ENCODE measurements at regions of chr19 and their contacts with region 1.

Region 1: DNA sequence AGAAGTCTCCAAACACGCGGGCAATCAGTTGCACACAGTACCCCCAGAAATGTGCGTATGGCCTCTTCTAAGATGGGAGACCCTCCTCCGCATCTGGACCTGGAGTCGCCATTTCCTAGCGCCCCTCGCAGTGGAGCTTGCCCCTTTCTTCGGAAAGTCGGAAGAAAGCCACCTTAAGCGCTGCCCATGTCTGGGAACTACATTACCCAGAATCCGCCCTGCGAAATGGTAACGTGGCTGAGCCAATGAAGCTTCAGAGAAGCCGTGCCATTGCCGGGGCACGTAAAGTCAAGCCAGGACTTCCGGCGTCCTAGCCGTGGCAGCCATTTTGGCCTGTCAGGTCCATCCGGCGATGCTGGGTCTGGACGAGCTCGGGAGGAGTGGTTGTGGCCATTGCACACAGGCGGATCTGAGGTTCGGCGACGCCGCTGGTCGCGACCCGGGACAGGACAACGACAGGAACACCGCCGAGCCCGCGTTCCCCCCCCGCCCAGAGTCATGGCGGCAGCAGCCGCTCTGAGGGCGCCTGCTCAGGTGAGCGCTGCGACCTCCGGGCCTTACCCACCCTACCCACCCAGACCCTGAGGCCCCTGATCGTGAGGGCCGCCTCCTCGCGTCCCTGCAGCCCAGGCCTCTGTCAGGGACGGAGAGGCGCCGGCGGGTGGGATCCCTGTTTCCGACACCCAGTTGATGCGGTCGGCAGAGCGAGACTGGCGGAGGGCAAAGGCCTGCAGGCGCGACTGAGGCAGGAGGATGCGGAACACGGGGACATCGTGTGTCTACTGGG is at the start of gene ZNF586:
- DNase-seq: peak; percentile 90
- H3K4me3 ChIP-seq: peak within 1 kb of the TSS; percentile 50 to 99 (median 85)
- H3K27ac ChIP-seq: peak within 1 kb of the TSS; percentile 85 to 95 (median 88)
- H3K4me1 ChIP-seq: peaks cover 0 to 19% (median 8%) of the 10 kb centered on the region in 4 donors
- H3K27me3 ChIP-seq: no peaks in the 10 kb centered on the region
- CTCF ChIP-seq: no peak
- EP300 ChIP-seq: no peak
- POLR2A ChIP-seq: peak; percentile 58
- total RNA-seq, gene ZNF586: 20.8 to 79.2 (median 27.3) TPM

Region 2: GRCh38 chr19:57719901-57720519 is 49.5 kb before region 1 on chr19:
- in situ Hi-C with region 1: no loop called
- intact Hi-C with region 1: no loop called
- DNase-seq: no peak
- H3K4me3 ChIP-seq: no peak overlapping the region
- H3K27ac ChIP-seq: no peak overlapping the region
- H3K4me1 ChIP-seq: no peaks in the 10 kb centered on the region
- H3K27me3 ChIP-seq: no peaks in the 10 kb centered on the region
- CTCF ChIP-seq: no peak
- EP300 ChIP-seq: no peak
- POLR2A ChIP-seq: no peak

Region 3: DNA sequence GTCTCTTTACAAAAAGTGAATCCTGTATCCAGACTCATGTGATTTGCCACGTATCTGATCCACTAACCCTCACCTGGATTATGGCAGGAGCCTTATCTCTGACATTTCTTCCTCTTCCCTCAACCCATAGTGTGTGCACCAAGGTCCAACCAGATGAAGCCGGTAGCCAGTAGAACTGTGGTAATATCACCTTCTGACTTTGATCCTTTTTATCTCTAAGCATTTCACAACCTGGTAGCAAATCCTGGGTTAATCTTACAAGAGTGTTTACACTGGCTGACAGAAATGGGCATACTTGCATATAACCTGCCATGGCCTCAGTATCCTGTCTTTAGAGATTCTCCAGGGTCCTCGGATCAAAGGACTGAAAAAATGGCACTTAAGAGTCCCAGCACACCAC is 145.0 kb after region 1 on chr19:
- in situ Hi-C with region 1: no loop called
- intact Hi-C with region 1: loop called (anchors 10 kb)
- DNase-seq: no peak
- H3K4me3 ChIP-seq: no peak overlapping the region
- H3K27ac ChIP-seq: no peak overlapping the region
- H3K4me1 ChIP-seq: peaks cover 6 to 13% (median 9%) of the 10 kb centered on the region in 4 donors
- H3K27me3 ChIP-seq: no peaks in the 10 kb centered on the region
- CTCF ChIP-seq: no peak
- EP300 ChIP-seq: no peak
- POLR2A ChIP-seq: no peak